Activated B cell treated with CpG ODN at 0.5 μM for 24 hours (primary cell): ENCODE measurements at regions of chr14 and their contacts with region 1.

Region 1: GRCh38 chr14:89673512-89674225 is 256.6 kb upstream of the FOXN3 start:
- DNase-seq: no peak
- ATAC-seq: no peak
- H3K4me3 Mint-ChIP-seq: no peak overlapping the region
- H3K27ac Mint-ChIP-seq: no peak overlapping the region
- H3K4me1 Mint-ChIP-seq: peaks cover 9% of the 10 kb centered on the region
- H3K27me3 Mint-ChIP-seq: no peaks in the 10 kb centered on the region
- CTCF ChIP-seq: no peak

Region 2: GRCh38 chr14:89660166-89660565 is 13.5 kb before region 1 on chr14:
- CTCF ChIA-PET with region 1: no interaction called
- POLR2A ChIA-PET with region 1: no interaction called
- intact Hi-C with region 1: loop called (anchors 2 kb)
- DNase-seq: no peak
- ATAC-seq: no peak
- H3K4me3 Mint-ChIP-seq: no peak overlapping the region
- H3K27ac Mint-ChIP-seq: no peak overlapping the region
- H3K4me1 Mint-ChIP-seq: no peaks in the 10 kb centered on the region
- H3K27me3 Mint-ChIP-seq: no peaks in the 10 kb centered on the region
- CTCF ChIP-seq: no peak